ENCODE measurements at regions of chr15 and their contacts with region 1.

Region 1: GRCh38 chr15:58521293-58521991 is 89.7 kb downstream of the LIPC start:
- H3K4me3 Mint-ChIP-seq: no peak overlapping the region
- H3K27ac Mint-ChIP-seq: peak overlapping the region; percentile 73
- H3K4me1 Mint-ChIP-seq: peaks cover 99% of the 10 kb centered on the region
- H3K27me3 Mint-ChIP-seq: no peaks in the 10 kb centered on the region

Region 2: GRCh38 chr15:58447271-58448010 is 74.0 kb before region 1 on chr15:
- intact Hi-C with region 1: loop called (anchors 5 kb)
- H3K4me3 Mint-ChIP-seq: peak overlapping the region; percentile 0
- H3K27ac Mint-ChIP-seq: peak overlapping the region; percentile 85
- H3K4me1 Mint-ChIP-seq: peaks cover 45% of the 10 kb centered on the region
- H3K27me3 Mint-ChIP-seq: peaks cover 4% of the 10 kb centered on the region

Region 3: DNA sequence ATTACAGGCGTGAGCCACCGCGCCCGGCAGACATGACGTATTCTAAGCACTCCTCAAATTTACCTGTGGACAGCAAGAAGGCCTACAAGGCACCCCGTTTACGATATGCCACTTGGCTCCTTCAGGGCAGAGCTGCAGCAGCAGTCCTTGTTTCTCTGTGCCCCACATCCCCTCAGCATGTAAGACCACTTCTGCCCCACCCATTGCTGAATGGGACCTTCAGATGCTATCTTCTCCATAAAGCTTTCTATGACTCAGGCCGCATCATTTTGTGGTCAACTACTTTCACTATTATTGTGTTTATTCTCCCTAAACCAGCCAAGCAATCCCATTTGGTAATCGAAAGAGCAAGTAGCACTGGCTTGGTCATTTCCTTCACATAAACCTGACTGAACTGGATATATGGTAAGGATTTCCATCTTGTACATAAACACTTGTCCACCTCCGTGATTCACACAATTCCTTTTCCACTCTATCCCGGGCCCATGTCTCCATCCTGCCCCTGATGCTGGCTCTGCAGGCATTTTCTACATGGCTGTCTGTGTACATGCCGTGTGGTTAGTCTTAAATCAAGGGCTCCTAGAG is 64.0 kb before region 1 on chr15:
- intact Hi-C with region 1: loop called (anchors 5 kb)
- H3K4me3 Mint-ChIP-seq: no peak overlapping the region
- H3K27ac Mint-ChIP-seq: peak overlapping the region; percentile 60
- H3K4me1 Mint-ChIP-seq: peaks cover 52% of the 10 kb centered on the region
- H3K27me3 Mint-ChIP-seq: peaks cover 9% of the 10 kb centered on the region

Region 4: DNA sequence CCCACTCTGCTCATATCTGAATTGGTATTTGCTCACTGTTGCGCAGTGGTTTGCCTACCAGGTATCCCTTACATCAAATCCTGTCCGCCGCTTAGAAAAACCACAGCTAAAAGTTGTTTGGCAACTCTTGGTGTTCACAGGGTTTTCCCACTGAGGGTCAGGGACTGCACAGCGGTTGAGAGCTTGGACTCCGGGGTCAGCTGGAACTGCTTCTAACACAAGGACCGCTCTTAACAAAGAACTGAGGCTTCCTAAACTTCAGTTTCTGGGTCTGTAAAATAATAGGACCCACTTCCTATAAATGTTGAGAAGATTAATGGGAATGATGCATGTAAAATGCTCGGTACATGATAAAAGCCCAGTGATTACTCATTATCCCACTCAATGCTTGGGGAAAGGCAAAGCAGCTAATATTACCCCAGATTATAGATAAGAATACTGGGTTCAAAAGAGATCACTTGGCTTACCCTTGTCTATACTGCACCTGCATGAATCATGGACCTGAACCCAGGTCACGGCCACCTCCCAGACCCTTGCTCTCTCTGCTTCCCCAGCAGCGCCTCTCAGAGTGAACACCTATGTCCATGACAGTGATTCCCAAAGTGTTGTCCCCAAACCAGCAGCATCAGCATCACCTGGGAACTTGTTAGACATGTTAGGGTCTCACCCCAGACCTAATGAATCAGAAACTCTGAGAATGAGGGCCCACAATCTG is 53.6 kb before region 1 on chr15:
- intact Hi-C with region 1: no loop called
- H3K4me3 Mint-ChIP-seq: no peak overlapping the region
- H3K27ac Mint-ChIP-seq: no peak overlapping the region
- H3K4me1 Mint-ChIP-seq: peaks cover 7% of the 10 kb centered on the region
- H3K27me3 Mint-ChIP-seq: peaks cover 3% of the 10 kb centered on the region

Region 5: DNA sequence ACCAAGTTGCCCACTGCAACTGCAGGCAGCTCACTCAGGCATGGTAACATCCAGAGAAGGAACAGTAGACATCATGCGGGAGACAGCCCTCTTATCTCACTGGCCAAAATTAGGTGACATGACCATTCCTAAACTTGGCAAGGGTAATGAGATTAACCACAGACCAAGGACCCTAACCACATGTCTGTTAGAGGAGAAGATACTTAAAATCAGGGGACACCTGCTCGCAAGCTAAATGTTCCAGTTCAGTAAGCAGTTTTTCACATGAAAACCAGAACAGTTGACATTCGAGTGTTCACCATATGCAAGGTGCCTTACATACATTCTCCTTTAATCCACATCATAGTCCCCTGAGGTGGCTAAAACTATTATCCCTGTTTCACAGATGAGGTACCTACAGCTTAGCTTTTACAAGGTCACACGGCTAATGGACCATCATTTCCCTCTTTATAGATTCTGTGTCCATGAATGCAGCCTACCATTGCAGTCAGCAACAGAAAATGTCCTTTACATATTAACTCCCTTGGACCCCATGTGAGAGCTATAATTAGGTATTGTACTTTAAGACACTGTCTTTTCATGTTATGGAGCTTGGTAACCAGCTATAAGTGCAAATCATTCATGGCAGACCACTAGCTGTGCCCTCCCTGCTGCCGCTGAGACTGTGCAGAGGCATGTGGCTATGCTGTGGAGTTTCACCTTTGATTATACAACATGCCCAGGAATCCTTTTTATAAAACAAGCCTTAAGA is 64.4 kb after region 1 on chr15:
- intact Hi-C with region 1: loop called (anchors 10 kb)
- H3K4me3 Mint-ChIP-seq: no peak overlapping the region
- H3K27ac Mint-ChIP-seq: no peak overlapping the region
- H3K4me1 Mint-ChIP-seq: peaks cover 40% of the 10 kb centered on the region
- H3K27me3 Mint-ChIP-seq: no peaks in the 10 kb centered on the region

Measured in dendritic cell treated with granulocyte-macrophage colony-stimulating factor and Interleukin-4, amounts not matched to agents 40 ng/mL and 50 ng/mL, for 4 days (primary cell).